HEK293 (cell line): ENCODE measurements at regions of chr12 and their contacts with region 1.

Region 1: GRCh38 chr12:14239350-14239934 is 126.0 kb upstream of the ATF7IP start:
- H3K4me3 ChIP-seq: no peak overlapping the region
- H3K27ac ChIP-seq: no peak overlapping the region
- H3K4me1 ChIP-seq: no peaks in the 10 kb centered on the region
- CTCF ChIP-seq: no peak

Region 2: DNA sequence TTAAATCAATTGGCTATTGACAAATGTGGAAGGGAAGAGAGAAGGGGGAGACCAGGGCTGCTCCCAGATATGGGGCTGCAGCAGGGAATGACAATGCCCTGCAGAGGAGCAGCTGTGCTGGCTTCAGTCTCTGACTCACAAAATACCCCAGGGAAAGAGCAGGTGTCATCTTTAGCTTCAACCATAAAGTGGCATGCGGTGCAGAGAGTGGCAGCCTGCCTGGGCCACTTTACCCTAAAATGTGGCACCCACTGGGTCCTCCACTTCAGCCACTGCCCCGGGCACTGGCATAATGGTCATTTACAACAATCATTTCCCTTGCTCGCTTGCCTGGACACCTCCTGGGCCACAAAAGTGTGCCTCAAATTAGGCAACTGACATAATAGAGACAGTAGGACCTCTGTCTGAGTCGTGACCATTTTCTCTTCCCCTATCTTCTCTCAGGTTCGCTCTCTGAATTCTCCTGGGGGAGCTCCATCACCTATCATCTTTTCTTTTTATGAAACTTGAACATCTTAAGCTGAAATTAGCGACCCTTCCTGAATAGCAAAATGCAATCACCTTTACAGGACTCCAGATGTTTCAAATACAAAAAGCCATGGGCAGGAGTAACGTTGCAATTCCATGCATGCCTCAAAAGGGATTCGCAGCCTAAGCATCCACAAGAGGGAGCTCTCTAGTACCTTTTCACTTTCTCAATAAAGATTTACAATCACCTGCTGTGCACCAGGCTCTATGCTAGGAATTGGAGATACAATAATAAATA is 53.8 kb before region 1 on chr12:
- CTCF ChIA-PET with region 1: interaction called, 11 read pairs
- POLR2A ChIA-PET with region 1: no interaction called
- H3K4me3 ChIP-seq: no peak overlapping the region
- H3K27ac ChIP-seq: no peak overlapping the region
- H3K4me1 ChIP-seq: no peaks in the 10 kb centered on the region
- CTCF ChIP-seq: peak; percentile 43; the same call in 1 of the 2 replicates

Region 3: GRCh38 chr12:14454098-14454907 is 214.9 kb after region 1 on chr12:
- CTCF ChIA-PET with region 1: interaction called, 29 read pairs
- POLR2A ChIA-PET with region 1: no interaction called
- H3K4me3 ChIP-seq: no peak overlapping the region
- H3K27ac ChIP-seq: no peak overlapping the region
- H3K4me1 ChIP-seq: no peaks in the 10 kb centered on the region
- CTCF ChIP-seq: no peak

Region 4: GRCh38 chr12:14618983-14619382 is 379.5 kb after region 1 on chr12:
- CTCF ChIA-PET with region 1: interaction called, 22 read pairs
- POLR2A ChIA-PET with region 1: no interaction called
- H3K4me3 ChIP-seq: no peak overlapping the region
- H3K27ac ChIP-seq: no peak overlapping the region
- H3K4me1 ChIP-seq: no peaks in the 10 kb centered on the region
- CTCF ChIP-seq: no peak

Region 5: DNA sequence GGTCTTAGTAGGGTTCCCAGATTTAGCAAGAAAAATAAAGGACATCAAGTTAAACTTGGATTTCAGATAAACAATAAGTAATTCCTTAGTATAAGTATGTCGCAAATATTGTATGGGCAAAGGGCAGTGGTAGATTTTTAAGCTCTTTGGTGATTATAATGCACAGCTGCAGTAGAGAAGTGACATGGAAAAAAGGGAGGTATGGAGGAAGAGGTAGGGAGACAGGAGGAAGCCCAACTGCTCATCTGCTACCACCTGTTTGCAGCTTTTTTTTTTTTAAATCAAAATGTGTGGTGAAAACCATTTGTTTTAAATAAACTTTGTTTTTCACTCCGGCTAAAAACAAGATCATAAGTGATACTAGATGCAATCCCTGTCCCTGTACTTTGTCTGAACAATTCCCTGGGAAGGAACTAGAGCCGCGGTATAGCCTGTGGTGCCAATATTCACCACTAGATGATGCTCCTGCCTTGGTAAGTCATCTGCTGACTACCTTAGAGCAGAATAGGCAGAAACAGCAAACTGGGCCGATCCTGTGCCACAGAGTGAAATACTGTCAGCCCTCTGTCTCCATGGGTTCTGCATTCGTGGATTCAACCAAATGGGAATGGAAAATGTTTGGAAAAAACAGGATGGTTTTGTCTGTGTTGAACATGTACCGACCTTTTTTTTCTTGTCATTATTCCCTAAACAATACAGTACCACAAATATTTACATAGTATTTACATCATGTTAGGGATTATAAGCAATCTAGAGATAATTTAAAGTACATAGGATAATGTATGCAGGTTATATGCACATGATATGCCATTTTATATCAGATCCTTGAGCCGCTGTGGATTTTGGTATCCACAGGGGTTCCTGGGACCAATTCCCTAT is 390.6 kb after region 1 on chr12:
- CTCF ChIA-PET with region 1: interaction called, 17 read pairs
- POLR2A ChIA-PET with region 1: no interaction called
- H3K4me3 ChIP-seq: no peak overlapping the region
- H3K27ac ChIP-seq: no peak overlapping the region
- H3K4me1 ChIP-seq: no peaks in the 10 kb centered on the region
- CTCF ChIP-seq: peak; percentile 85

Region 6: DNA sequence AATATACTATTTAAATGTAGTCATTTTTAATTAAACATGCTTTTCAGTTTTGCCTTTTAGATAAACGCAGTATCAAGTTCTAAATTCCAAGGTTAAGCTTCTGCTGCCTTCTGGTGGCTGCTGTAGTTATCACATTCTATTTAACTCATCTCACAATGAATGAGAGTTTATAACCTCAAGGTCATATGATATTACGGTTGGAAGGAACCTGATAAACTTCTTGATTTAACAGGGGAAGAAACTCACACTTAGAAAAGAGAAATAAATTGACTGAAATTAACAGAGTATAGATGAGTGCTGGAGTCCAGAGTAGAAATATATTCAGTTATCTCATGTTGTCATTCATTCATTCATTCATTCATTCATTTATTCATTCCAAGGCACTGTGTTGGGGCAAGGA is 425.1 kb after region 1 on chr12:
- CTCF ChIA-PET with region 1: interaction called, 21 read pairs
- POLR2A ChIA-PET with region 1: no interaction called
- H3K4me3 ChIP-seq: no peak overlapping the region
- H3K27ac ChIP-seq: no peak overlapping the region
- H3K4me1 ChIP-seq: no peaks in the 10 kb centered on the region
- CTCF ChIP-seq: no peak